ENCODE measurements at regions of chr7 and their contacts with region 1.

Region 1: GRCh38 chr7:78284945-78285344 is 486.4 kb downstream of the PHTF2 start:
- DNase-seq: no peak
- H3K4me3 ChIP-seq: no peak overlapping the region
- H3K27ac ChIP-seq: peak overlapping the region in 1 of 4 donors; percentile 42
- H3K4me1 ChIP-seq: peaks cover 0 to 26% (median 19%) of the 10 kb centered on the region in 4 donors
- H3K27me3 ChIP-seq: no peaks in the 10 kb centered on the region
- CTCF ChIP-seq: no peak
- EP300 ChIP-seq: no peak
- POLR2A ChIP-seq: no peak

Region 2: GRCh38 chr7:78226059-78226719 is 58.8 kb before region 1 on chr7:
- intact Hi-C with region 1: loop called (anchors 10 kb)
- DNase-seq: no peak
- H3K4me3 ChIP-seq: no peak overlapping the region
- H3K27ac ChIP-seq: peak overlapping the region in 1 of 4 donors; percentile 33
- H3K4me1 ChIP-seq: peaks cover 0 to 26% (median 18%) of the 10 kb centered on the region in 4 donors
- H3K27me3 ChIP-seq: no peaks in the 10 kb centered on the region
- CTCF ChIP-seq: peak; percentile 22 to 44 (median 35)
- EP300 ChIP-seq: no peak
- POLR2A ChIP-seq: no peak